WTC11 (cell line): ENCODE measurements at regions of chr1 and their contacts with region 1.

Region 1: DNA sequence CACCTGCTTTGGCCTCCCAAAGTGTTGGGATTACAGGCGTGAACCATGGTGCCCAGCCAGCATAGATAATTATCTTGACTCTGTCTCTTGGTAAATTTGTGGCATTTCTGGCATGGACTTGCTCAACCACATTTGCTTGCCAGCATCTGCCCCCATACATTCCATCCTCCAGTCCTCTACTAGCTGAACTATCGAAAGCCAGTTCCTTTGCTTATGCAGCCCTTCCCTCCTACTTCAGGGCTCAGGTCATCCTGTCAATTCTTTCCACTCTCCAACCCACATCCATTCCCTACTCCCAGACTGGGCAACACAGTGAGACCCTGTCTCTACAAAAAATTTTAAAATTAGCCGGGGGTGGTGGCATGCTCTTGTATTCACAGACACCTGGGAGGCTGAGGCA is 13.0 kb upstream of the UQCRHL start:
- DNase-seq: no peak
- ATAC-seq: no peak
- H3K4me3 Mint-ChIP-seq: no peak overlapping the region
- H3K27ac Mint-ChIP-seq: no peak overlapping the region
- H3K4me1 Mint-ChIP-seq: peaks cover 3% of the 10 kb centered on the region
- H3K27me3 Mint-ChIP-seq: no peaks in the 10 kb centered on the region
- CTCF ChIP-seq: no peak

Region 2: DNA sequence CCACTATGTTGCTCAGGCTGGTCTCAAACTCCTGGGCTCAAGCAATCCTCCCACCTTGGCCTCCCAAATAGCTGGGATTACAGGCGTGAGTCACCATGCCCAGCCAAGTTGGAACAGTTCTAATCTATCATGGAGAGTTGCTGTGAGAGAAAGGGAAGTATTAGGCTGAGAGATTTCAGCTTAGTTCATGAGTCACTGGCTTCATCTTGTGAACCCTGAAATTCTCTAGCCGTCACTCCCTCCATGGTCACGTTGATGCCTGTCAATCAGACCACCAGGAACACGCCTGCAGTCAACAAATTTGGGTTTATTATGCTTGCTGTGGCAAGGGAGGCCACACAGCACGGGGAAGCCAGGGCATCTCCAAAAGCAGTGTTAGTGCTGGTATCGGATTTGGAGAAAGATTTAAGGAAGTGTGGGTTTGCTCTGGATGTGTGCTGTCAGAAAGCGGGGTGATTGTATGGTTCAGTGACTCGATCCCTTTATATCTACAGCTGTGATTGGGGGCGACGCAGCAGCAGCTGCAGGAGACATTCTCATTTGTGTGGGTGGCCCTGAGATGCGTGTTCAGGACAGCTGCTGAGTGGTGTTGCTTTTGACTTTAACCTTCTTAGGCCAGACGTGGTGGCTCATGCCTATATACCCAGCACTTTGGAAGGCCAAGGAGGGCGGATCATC is 31.7 kb before region 1 on chr1:
- CTCF ChIA-PET with region 1: interaction called, 32 read pairs
- POLR2A ChIA-PET with region 1: no interaction called
- DNase-seq: no peak
- ATAC-seq: no peak
- H3K4me3 Mint-ChIP-seq: no peak overlapping the region
- H3K27ac Mint-ChIP-seq: peak overlapping the region; percentile 1; the same call in 1 of the 2 replicates
- H3K4me1 Mint-ChIP-seq: no peaks in the 10 kb centered on the region; the same call in 1 of the 2 replicates
- H3K27me3 Mint-ChIP-seq: no peaks in the 10 kb centered on the region
- CTCF ChIP-seq: no peak

Region 3: DNA sequence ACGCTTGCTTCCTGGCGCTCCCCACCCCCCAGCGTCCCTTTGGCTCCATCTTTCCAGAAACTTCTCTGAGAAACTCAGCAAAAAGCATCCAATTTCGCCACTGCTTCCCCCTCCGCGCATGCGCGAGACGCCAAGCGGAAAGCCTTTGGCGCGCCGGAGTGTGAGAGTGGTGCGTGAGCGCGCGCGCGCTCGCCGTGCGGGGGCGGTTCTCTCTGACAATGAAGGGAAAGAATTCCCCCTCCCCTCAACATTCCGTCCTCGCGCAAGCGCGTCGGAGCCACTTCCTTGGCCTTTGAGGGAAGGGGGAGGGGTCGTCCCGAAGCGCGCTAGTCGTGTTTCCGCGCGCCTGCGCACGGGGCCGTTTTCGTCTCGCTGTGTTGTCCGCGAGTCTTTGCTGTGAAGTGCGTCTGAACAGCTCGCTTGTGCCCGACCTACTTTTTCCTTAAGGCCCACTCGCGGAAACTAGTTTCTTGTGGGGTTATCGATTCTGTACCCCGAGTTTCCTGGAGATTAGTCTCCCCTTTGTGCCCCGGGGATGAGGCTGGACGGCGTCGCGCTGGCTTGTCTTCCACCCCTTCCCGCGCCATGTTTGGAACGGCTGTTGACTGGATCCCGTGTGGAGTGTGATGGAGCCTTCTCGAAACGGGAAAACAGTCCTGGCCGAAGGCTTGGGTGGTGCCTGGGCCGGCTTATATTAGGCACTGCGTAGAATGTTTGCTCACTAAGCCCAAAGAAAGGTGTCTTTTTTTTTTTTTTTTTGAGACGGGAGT is 15.4 kb after region 1 on chr1:
- CTCF ChIA-PET with region 1: interaction called, 32 read pairs
- POLR2A ChIA-PET with region 1: interaction called, 10 read pairs
- DNase-seq: peak; percentile 92
- ATAC-seq: peak; percentile 50
- H3K4me3 Mint-ChIP-seq: peak overlapping the region; percentile 81
- H3K27ac Mint-ChIP-seq: peak overlapping the region; percentile 99
- H3K4me1 Mint-ChIP-seq: peaks cover 33% of the 10 kb centered on the region
- H3K27me3 Mint-ChIP-seq: no peaks in the 10 kb centered on the region; the same call in 1 of the 2 replicates
- CTCF ChIP-seq: no peak

Region 4: DNA sequence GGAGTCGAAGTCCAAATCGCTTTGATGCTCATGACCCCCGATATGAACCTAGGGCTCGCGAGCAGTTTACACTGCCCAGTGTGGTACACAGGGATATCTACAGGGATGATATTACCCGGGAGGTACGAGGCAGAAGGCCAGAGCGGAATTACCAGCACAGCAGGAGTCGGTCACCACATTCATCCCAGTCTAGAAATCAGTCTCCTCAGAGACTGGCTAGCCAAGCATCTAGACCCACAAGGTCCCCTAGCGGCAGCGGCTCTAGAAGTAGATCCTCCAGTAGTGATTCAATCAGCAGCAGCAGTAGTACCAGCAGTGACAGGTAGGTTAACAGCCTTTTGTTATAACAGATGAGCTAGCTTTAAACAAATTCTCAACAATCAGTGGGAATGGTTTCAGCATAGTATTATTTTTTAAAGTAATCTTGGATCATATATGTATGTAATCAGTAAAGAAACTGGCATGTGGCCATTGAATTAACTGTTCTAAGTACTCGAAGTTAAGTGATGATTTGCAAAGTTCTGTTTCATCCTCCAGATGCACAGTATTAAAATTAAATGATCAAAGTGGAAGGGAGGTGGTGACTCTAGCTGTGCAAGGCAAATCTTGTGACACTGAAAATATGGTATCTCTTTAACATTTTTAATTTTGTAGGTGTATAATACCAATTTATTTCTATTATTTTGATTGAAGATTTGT is 56.0 kb after region 1 on chr1:
- CTCF ChIA-PET with region 1: interaction called, 19 read pairs
- POLR2A ChIA-PET with region 1: interaction called, 4 read pairs
- DNase-seq: peak; percentile 69
- ATAC-seq: peak; percentile 98
- H3K4me3 Mint-ChIP-seq: no peak overlapping the region
- H3K27ac Mint-ChIP-seq: peak overlapping the region; percentile 89
- H3K4me1 Mint-ChIP-seq: peaks cover 12% of the 10 kb centered on the region
- H3K27me3 Mint-ChIP-seq: no peaks in the 10 kb centered on the region
- CTCF ChIP-seq: peak; percentile 15; the same call in 1 of the 2 replicates

Region 5: GRCh38 chr1:15923241-15923640 is 102.8 kb after region 1 on chr1:
- CTCF ChIA-PET with region 1: interaction called, 14 read pairs
- POLR2A ChIA-PET with region 1: no interaction called
- DNase-seq: no peak
- ATAC-seq: no peak
- H3K4me3 Mint-ChIP-seq: no peak overlapping the region
- H3K27ac Mint-ChIP-seq: no peak overlapping the region
- H3K4me1 Mint-ChIP-seq: peaks cover 9% of the 10 kb centered on the region; the same call in 1 of the 2 replicates
- H3K27me3 Mint-ChIP-seq: no peaks in the 10 kb centered on the region
- CTCF ChIP-seq: no peak

Region 6: DNA sequence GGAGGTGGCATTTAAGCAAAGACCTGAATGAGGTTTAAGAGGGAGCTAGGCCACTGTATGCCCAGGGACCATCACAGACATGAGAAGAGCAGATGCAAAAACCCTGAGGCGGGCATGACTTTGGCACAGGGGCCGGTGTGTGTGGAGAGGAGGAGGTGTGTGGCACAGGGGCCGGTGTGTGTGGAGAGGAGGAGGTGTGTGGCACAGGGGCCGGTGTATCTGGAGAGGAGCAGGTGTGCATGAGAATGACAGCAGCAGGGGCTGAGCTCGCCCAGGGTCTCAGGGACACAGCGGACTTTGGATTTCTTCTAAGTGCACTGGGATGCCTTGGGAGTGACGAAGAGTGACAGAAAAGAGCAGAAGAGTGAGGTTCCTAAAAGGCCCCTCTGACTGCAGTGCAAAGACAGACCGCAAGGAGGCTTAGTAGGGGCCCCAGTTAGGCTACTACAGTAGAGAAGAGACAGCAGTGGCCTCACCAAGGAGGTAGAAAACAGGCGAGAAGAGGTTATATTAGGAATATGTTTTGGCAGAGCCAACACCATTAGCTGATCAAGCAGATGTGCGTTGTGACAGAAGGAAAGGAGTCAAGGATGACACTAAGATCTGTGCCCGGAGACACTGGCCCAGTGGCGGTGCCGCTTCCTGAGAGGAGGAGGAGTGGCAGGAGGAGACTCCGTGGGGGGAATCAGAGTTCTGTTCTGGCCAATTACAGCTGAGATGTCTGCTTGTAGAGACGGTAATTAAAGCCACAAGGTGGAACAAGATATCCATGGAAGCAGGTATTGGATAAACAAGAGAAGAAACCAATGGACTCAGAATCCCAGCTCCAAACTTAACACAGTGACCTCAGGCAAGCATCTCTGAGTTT is 137.0 kb after region 1 on chr1:
- CTCF ChIA-PET with region 1: interaction called, 19 read pairs
- POLR2A ChIA-PET with region 1: no interaction called
- DNase-seq: peak; percentile 72
- ATAC-seq: peak; percentile 79
- H3K4me3 Mint-ChIP-seq: no peak overlapping the region
- H3K27ac Mint-ChIP-seq: peak overlapping the region; percentile 5; the same call in 1 of the 2 replicates
- H3K4me1 Mint-ChIP-seq: peaks cover 57% of the 10 kb centered on the region
- H3K27me3 Mint-ChIP-seq: no peaks in the 10 kb centered on the region
- CTCF ChIP-seq: peak; percentile 63